Dendritic cell treated with granulocyte-macrophage colony-stimulating factor and Interleukin-4, amounts not matched to agents 40 ng/mL and 50 ng/mL, for 4 days (primary cell): ENCODE measurements at regions of chr15 and their contacts with region 1.

Region 1: DNA sequence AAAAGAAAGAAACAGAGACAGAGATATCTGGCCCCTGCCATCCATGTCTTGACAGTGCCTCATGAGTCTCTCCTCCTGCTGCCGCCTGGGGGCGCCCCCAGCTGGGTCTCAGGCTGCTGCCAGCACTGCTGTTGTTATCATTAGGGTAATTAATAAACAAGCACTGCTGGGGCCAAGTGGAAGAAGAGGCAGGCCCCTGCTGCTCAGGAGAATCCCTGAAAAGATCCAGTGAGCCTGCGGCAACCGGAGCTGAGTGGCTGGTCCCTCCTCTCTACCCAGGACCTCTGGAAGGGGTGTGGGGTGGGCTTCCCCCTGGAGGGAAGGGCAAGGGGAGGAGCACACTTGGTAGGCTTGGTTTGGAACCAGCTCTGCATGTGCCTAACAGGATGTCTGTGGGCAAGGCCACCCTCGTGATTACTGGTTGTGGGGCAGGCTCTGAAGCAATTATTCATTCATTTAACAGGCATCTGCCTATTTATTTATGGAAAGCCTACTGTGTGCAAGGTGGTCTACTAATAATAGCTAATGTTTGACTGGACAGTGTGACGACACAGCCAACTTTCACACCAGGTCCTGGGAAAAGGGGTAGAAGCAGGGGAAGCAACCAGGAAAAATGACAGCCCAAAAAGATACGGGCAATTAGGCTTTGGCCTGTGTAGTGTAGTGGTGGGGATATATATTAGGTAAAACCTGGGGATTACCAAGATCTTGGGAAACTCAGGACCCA is 1.2 kb upstream of the TYRO3 start:
- H3K4me3 Mint-ChIP-seq: peak overlapping the region; percentile 76
- H3K27ac Mint-ChIP-seq: no peak overlapping the region
- H3K4me1 Mint-ChIP-seq: peaks cover 43% of the 10 kb centered on the region
- H3K27me3 Mint-ChIP-seq: peaks cover 38% of the 10 kb centered on the region

Region 2: DNA sequence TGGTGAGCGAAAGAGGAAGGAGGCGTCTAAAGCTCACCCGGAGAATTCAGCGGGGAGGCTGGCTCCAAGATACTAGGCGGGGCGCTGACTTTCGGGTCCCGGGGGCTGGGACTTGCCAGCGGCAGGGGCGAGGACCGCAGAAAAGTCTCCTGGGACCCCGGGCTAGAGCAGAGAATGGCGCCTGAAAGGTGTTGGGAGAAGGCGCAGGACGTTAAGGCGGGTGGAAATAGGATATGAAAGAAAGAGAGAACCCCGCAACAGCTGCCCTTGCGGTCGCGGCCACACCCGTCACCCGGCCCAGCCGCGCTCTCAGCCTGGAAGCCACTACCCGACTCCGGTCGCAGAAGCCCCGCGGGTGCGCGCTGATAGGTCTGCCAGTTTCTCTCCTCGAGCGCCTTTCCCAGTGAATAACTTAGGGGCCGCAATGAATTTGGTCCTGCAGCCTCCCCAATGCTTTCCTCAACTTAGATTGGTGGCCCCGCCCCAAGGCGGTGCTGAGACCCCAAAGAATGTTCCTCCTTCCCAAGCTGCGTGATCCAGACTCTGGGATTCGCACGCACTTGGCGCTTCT is 44.8 kb before region 1 on chr15:
- intact Hi-C with region 1: loop called (anchors 5 kb)
- H3K4me3 Mint-ChIP-seq: peak overlapping the region; percentile 79
- H3K27ac Mint-ChIP-seq: peak overlapping the region; percentile 31
- H3K4me1 Mint-ChIP-seq: peaks cover 22% of the 10 kb centered on the region
- H3K27me3 Mint-ChIP-seq: peaks cover 50% of the 10 kb centered on the region

Region 3: DNA sequence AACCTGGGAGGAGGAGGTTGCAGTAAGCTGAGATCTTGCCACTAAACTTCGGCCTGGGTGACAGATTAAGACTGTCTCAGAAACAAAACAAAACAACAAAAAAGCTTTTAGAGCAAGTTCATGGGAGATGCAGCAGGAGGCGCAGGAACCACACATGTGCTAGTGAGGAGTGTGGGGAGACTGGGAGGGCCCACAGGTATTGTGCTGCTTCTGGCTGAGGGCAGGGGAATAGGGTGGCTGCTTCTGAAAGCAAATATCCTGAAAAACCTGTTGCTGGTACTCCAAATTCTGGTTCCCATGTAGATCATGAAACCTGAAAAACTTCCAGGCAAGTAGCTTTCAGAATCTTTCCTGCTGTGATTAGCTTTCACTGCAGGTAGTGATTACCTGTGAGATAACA is 23.3 kb after region 1 on chr15:
- intact Hi-C with region 1: no loop called
- H3K4me3 Mint-ChIP-seq: no peak overlapping the region
- H3K27ac Mint-ChIP-seq: no peak overlapping the region
- H3K4me1 Mint-ChIP-seq: peaks cover 5% of the 10 kb centered on the region
- H3K27me3 Mint-ChIP-seq: peaks cover 29% of the 10 kb centered on the region

Region 4: GRCh38 chr15:41811432-41812195 is 253.8 kb after region 1 on chr15:
- intact Hi-C with region 1: loop called (anchors 10 kb)
- H3K4me3 Mint-ChIP-seq: no peak overlapping the region
- H3K27ac Mint-ChIP-seq: no peak overlapping the region
- H3K4me1 Mint-ChIP-seq: peaks cover 6% of the 10 kb centered on the region
- H3K27me3 Mint-ChIP-seq: no peaks in the 10 kb centered on the region